HCT116 (cell line): ENCODE measurements at regions of chr9 and their contacts with region 1.

Region 1: DNA sequence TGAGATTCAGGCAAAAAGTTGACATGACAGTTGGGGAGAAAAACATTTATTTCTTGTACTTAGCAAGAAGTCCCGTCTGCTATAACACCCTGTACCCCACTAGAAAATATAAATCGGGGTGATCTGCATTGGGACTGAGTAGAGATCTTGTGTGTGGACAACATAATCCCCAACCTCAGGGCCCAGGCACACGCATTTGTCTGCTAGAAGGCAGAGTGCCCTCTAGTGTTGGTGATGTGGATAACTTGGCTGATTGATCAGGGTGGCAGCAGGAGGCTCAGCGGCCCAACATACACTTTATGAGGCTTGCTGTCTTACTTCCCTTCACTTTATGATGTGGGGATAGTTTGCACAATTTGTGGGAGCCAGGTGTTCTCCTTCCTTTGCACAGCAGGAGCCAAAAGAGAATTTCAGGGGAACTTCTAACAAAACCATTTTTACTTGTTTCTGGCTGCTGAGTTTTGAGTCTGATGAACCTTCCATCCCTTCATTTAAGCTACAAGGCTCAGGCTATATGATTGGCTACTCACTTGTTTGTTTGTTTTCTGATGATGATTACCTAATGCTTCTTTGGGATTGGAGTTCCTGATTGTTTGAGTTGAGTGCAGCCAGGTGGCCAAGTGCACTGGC is 263.2 kb downstream of the DMAC1 start:
- DNase-seq: peak; percentile 18
- ATAC-seq: peak; percentile 94
- H3K4me3 ChIP-seq: no peak overlapping the region
- H3K27ac ChIP-seq: no peak overlapping the region
- H3K4me1 ChIP-seq: no peaks in the 10 kb centered on the region
- H3K27me3 ChIP-seq: peaks cover 4% of the 10 kb centered on the region; the same call in 1 of the 2 replicates
- CTCF ChIP-seq: peak; percentile 30 to 77 (median 76); a peak in 5 of 6 replicates
- POLR2A ChIP-seq: no peak
- RAD21 ChIP-seq: peak; percentile 55; the same call in 1 of the 2 replicates

Region 2: GRCh38 chr9:7053903-7054302 is 482.5 kb before region 1 on chr9:
- CTCF ChIA-PET with region 1: interaction called, 3 read pairs
- POLR2A ChIA-PET with region 1: no interaction called
- RAD21 ChIA-PET with region 1: no interaction called
- intact Hi-C with region 1: loop called (anchors 1 kb)
- DNase-seq: no peak
- ATAC-seq: no peak
- H3K4me3 ChIP-seq: no peak overlapping the region
- H3K27ac ChIP-seq: no peak overlapping the region
- H3K4me1 ChIP-seq: no peaks in the 10 kb centered on the region
- H3K27me3 ChIP-seq: no peaks in the 10 kb centered on the region
- CTCF ChIP-seq: no peak
- POLR2A ChIP-seq: no peak
- RAD21 ChIP-seq: no peak

Region 3: DNA sequence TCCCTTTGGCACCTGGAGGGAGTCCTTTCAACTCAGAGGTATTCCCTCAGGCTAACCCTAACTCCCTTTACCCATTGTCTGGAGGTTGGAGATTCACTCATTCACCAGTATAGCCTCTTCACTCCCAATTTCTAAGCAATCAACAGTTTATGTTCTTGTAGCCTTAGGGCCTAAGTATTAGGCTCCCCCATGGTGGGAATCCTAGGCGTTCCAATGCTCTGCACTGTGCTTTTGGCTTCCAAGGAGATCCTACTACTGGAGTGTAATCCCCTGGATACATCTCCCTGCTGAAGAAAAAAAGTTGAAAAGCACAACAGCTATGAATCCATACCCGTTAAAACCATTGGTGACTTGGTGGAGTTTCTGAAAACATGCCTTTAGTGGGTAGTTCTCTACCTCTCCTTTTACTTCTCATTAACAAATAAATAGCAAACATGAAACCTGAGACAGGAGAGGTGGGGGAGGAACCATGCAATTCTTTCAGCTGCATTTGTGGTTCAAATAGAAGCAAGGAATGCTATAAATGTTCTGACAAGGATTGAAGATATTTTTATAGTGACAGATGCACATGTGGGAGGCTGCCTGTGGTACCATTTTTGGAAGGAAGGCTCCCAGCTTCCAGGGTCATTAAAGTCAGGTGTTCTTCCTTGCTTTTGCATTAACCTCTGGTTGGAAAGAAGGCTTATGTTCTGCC is 133.9 kb before region 1 on chr9:
- CTCF ChIA-PET with region 1: interaction called, 4 read pairs
- POLR2A ChIA-PET with region 1: no interaction called
- RAD21 ChIA-PET with region 1: no interaction called
- intact Hi-C with region 1: loop called (anchors 2 kb)
- DNase-seq: no peak
- ATAC-seq: no peak
- H3K4me3 ChIP-seq: no peak overlapping the region
- H3K27ac ChIP-seq: no peak overlapping the region
- H3K4me1 ChIP-seq: no peaks in the 10 kb centered on the region
- H3K27me3 ChIP-seq: no peaks in the 10 kb centered on the region
- CTCF ChIP-seq: no peak
- POLR2A ChIP-seq: no peak
- RAD21 ChIP-seq: no peak

Region 4: GRCh38 chr9:8315211-8315610 is 778.8 kb after region 1 on chr9:
- CTCF ChIA-PET with region 1: no interaction called
- POLR2A ChIA-PET with region 1: no interaction called
- RAD21 ChIA-PET with region 1: no interaction called
- intact Hi-C with region 1: no loop called
- DNase-seq: no peak
- ATAC-seq: no peak
- H3K4me3 ChIP-seq: no peak overlapping the region
- H3K27ac ChIP-seq: no peak overlapping the region
- H3K4me1 ChIP-seq: no peaks in the 10 kb centered on the region
- H3K27me3 ChIP-seq: no peaks in the 10 kb centered on the region
- CTCF ChIP-seq: no peak
- POLR2A ChIP-seq: no peak
- RAD21 ChIP-seq: no peak